AG04450 (cell line): ENCODE measurements at regions of chr12 and their contacts with region 1.

Region 1: GRCh38 chr12:57175428-57176138 is 28.2 kb upstream of the LRP1-AS start:
- DNase-seq: peak; percentile 44
- H3K4me3 ChIP-seq: no peak overlapping the region
- H3K27ac ChIP-seq: no peak overlapping the region
- H3K27me3 ChIP-seq: no peaks in the 10 kb centered on the region
- CTCF ChIP-seq: peak; percentile 74

Region 2: GRCh38 chr12:57099047-57099714 is 76.4 kb before region 1 on chr12:
- CTCF ChIA-PET with region 1: interaction called, 10 read pairs
- POLR2A ChIA-PET with region 1: no interaction called
- DNase-seq: no peak
- H3K4me3 ChIP-seq: no peak overlapping the region
- H3K27ac ChIP-seq: no peak overlapping the region
- H3K27me3 ChIP-seq: no peaks in the 10 kb centered on the region
- CTCF ChIP-seq: no peak

Region 3: GRCh38 chr12:57657744-57658143 is 482.2 kb after region 1 on chr12:
- CTCF ChIA-PET with region 1: no interaction called
- POLR2A ChIA-PET with region 1: no interaction called
- DNase-seq: no peak
- H3K4me3 ChIP-seq: no peak overlapping the region
- H3K27ac ChIP-seq: no peak overlapping the region
- H3K27me3 ChIP-seq: peaks cover 2% of the 10 kb centered on the region
- CTCF ChIP-seq: no peak